ENCODE measurements at regions of chr3 and their contacts with region 1.

Region 1: GRCh38 chr3:190204200-190204599 is 83.5 kb upstream of the P3H2 start:
- DNase-seq: no peak
- ATAC-seq: no peak
- H3K4me3 ChIP-seq: no peak overlapping the region
- H3K4me3 Mint-ChIP-seq: no peak overlapping the region
- H3K27ac ChIP-seq: no peak overlapping the region
- H3K27ac Mint-ChIP-seq: no peak overlapping the region
- H3K4me1 ChIP-seq: no peaks in the 10 kb centered on the region
- H3K4me1 Mint-ChIP-seq: no peaks in the 10 kb centered on the region
- H3K27me3 ChIP-seq: no peaks in the 10 kb centered on the region
- H3K27me3 Mint-ChIP-seq: peaks cover 19% of the 10 kb centered on the region
- CTCF ChIP-seq: no peak

Region 2: GRCh38 chr3:189967254-189967865 is 236.8 kb before region 1 on chr3:
- CTCF ChIA-PET with region 1: no interaction called
- POLR2A ChIA-PET with region 1: no interaction called
- intact Hi-C with region 1: loop called (anchors 5 kb)
- DNase-seq: peak in 3 of 9 experiments; percentile 13 to 61 (median 45)
- ATAC-seq: no peak
- H3K4me3 ChIP-seq: no peak overlapping the region
- H3K4me3 Mint-ChIP-seq: no peak overlapping the region
- H3K27ac ChIP-seq: no peak overlapping the region
- H3K27ac Mint-ChIP-seq: no peak overlapping the region
- H3K4me1 ChIP-seq: no peaks in the 10 kb centered on the region
- H3K4me1 Mint-ChIP-seq: no peaks in the 10 kb centered on the region
- H3K27me3 ChIP-seq: no peaks in the 10 kb centered on the region
- H3K27me3 Mint-ChIP-seq: peaks cover 9% of the 10 kb centered on the region
- CTCF ChIP-seq: peak; percentile 92

Region 3: DNA sequence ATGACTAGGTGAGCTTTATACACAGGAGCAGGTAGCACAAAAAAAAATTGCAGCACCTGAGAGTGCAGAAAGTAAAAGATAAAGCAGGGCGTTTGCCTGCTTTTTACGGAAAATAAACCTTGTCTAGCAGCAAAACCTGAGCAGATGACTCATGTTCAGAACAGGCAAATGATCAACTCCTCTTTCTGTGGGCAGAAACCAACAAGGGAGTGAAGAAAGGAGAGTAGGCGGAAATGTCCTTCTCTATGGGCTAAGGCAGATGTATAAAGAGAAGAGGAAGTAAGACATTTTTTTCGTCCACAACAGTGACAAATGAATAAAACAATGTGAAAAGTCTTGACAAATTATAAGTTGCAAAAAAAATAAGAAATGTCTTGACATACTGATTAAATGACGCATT is 682.7 kb after region 1 on chr3:
- CTCF ChIA-PET with region 1: no interaction called
- POLR2A ChIA-PET with region 1: no interaction called
- intact Hi-C with region 1: no loop called
- DNase-seq: no peak
- ATAC-seq: no peak
- H3K4me3 ChIP-seq: no peak overlapping the region
- H3K4me3 Mint-ChIP-seq: no peak overlapping the region
- H3K27ac ChIP-seq: no peak overlapping the region
- H3K27ac Mint-ChIP-seq: no peak overlapping the region
- H3K4me1 ChIP-seq: no peaks in the 10 kb centered on the region
- H3K4me1 Mint-ChIP-seq: no peaks in the 10 kb centered on the region
- H3K27me3 ChIP-seq: no peaks in the 10 kb centered on the region
- H3K27me3 Mint-ChIP-seq: peaks cover 6% of the 10 kb centered on the region
- CTCF ChIP-seq: no peak

Measured in CD8-positive, alpha-beta T cell (primary cell).